ENCODE measurements at regions of chr9 and their contacts with region 1.

Region 1: DNA sequence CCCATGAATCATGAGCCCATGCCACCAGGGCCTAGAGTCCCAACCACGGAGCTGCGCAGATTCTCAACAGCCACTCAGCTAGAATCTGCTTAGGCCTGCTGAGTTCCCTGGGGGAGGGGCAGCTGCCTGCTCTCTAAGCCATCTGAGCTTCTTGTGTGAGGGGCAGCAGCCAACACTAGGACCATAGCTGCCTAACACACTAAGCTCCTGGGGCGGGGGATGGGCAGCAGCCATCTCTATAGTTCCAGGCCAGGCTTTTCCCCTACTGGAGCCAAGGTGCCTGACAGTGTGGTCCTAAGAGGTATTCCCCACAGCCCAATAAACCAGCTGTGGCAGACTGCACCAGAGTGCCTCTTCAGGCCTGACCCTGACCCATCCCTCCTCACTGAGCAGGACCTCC is 255.9 kb upstream of the ACO1 start:
- DNase-seq: no peak
- H3K4me3 ChIP-seq: no peak overlapping the region
- H3K27ac ChIP-seq: no peak overlapping the region
- H3K4me1 ChIP-seq: no peaks in the 10 kb centered on the region
- H3K27me3 ChIP-seq: no peaks in the 10 kb centered on the region
- CTCF ChIP-seq: no peak
- EP300 ChIP-seq: no peak
- POLR2A ChIP-seq: no peak

Region 2: DNA sequence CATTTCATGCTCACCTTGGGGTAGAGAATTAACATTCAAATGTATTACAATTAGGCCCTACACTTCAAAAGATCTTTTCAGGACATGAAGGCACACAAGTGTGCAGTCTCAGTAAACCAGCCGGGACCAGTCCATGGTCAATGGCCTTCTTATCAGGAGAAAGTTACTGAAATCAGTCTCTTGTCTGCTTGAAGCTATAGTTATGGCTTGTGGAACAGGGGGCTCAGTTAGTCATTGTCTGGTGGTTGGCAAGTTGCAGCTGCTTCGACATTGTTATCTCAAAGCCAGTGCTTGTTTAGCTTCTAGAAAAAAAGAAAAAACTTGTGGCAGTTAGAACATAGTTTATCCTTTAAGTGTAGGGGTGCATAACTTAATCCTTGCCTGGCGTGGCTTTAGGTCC is 42.8 kb after region 1 on chr9:
- intact Hi-C with region 1: loop called in 1 of 4 experiments (anchors 1 kb)
- DNase-seq: no peak
- H3K4me3 ChIP-seq: no peak overlapping the region
- H3K27ac ChIP-seq: no peak overlapping the region
- H3K4me1 ChIP-seq: no peaks in the 10 kb centered on the region
- H3K27me3 ChIP-seq: no peaks in the 10 kb centered on the region
- CTCF ChIP-seq: no peak
- EP300 ChIP-seq: no peak
- POLR2A ChIP-seq: no peak